ENCODE measurements at regions of chr18 and their contacts with region 1.

Region 1: DNA sequence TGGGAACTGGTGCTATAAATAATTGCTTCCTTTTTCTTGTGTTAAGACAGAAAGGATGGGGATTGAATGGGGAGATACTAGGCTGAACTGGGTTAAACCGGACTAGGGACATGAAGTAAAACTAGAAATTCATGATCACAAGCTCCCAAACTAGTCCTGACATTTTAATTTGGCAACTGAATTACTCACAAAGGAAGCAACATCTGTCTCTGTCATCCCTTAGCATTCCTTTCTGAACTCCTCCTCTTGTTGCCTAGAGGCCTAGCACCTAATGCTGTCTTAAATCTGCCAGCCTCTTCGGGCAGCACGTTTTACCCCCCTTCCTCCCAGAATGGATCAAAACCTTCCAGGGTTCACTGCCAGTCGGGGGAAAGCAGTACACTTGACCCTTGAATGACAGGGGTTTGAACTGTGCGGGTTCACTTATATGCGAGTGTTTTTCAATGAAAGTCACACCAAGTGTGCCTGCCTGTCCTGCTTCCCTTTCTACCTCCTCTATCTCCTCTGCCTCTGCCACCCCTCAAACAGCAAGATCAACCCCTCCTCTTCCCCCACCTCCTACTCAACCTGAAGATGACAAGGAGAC is 8.2 kb downstream of the KCTD1 start:
- DNase-seq: peak; percentile 81
- H3K4me3 Mint-ChIP-seq: peak overlapping the region; percentile 40
- H3K27ac Mint-ChIP-seq: peak overlapping the region; percentile 81
- H3K4me1 Mint-ChIP-seq: peaks cover 53% of the 10 kb centered on the region
- H3K27me3 Mint-ChIP-seq: no peaks in the 10 kb centered on the region
- CTCF ChIP-seq: no peak

Region 2: GRCh38 chr18:26480897-26481895 is 58.9 kb before region 1 on chr18:
- CTCF ChIA-PET with region 1: interaction called, 3 read pairs
- POLR2A ChIA-PET with region 1: interaction called, 108 read pairs
- intact Hi-C with region 1: no loop called
- DNase-seq: peak; percentile 88
- H3K4me3 Mint-ChIP-seq: peak overlapping the region; percentile 41
- H3K27ac Mint-ChIP-seq: peak overlapping the region; percentile 88
- H3K4me1 Mint-ChIP-seq: peaks cover 46% of the 10 kb centered on the region
- H3K27me3 Mint-ChIP-seq: no peaks in the 10 kb centered on the region
- CTCF ChIP-seq: no peak

Region 3: GRCh38 chr18:26487437-26487836 is 52.7 kb before region 1 on chr18:
- CTCF ChIA-PET with region 1: interaction called, 6 read pairs
- POLR2A ChIA-PET with region 1: interaction called, 108 read pairs
- intact Hi-C with region 1: no loop called
- DNase-seq: peak; percentile 92
- H3K4me3 Mint-ChIP-seq: no peak overlapping the region
- H3K27ac Mint-ChIP-seq: peak overlapping the region; percentile 83
- H3K4me1 Mint-ChIP-seq: peaks cover 34% of the 10 kb centered on the region
- H3K27me3 Mint-ChIP-seq: no peaks in the 10 kb centered on the region
- CTCF ChIP-seq: no peak

Region 4: GRCh38 chr18:27355019-27355707 is 815.0 kb after region 1 on chr18:
- CTCF ChIA-PET with region 1: no interaction called
- POLR2A ChIA-PET with region 1: no interaction called
- intact Hi-C with region 1: no loop called
- DNase-seq: no peak
- H3K4me3 Mint-ChIP-seq: no peak overlapping the region
- H3K27ac Mint-ChIP-seq: no peak overlapping the region
- H3K4me1 Mint-ChIP-seq: no peaks in the 10 kb centered on the region
- H3K27me3 Mint-ChIP-seq: peaks cover 68% of the 10 kb centered on the region
- CTCF ChIP-seq: no peak